CD4-positive, alpha-beta memory T cell (primary cell): ENCODE measurements at regions of chr6 and their contacts with region 1.

Region 1: DNA sequence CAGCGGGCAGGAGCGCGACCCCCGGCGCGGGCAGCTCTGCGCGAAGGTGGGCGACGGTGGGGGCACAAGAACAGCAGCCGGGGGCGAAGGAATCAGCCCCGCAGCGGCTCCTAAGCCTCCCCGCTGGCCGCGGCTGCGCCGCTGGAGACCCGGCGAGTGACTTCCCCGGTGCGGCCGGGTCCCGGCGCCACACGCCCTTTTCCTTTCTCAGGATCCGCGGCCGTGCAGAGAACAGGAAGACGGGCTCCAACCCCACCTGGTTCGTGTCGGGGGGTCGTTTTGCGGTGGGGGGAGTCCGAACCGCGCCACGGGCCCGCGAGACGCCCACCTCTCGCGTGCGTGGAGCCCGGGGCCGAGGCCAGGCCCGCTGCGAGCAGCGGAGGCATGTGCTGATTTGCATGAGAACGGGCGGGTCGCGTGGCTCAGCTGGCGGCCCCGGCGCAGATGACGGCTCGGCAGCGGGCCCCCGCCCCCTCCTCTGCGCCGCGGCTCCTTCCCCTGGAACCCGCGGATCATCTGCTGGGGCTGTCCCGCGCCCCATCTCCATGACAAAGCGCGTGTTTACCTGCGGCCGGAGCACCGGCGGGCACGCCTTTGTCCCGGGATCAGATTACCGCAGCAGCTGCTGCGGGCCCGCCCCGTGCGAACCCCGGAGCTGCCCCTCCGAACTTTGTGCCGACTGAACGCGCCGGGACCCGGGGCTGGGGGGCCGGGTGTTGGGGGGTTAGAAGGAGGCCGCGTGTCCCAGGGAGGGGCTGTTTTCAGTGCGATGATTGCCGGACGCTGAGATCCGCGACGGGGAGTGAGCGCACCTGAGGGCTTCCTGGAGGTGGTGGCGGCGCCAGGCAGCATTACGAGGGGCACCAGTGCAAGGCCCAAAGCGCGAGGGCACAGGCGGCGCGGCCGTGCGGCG is 4.9 kb upstream of the DLL1 start:
- DNase-seq: peak in 4 of 5 donors; percentile 43 to 50 (median 45)
- H3K4me3 ChIP-seq: peak overlapping the region; percentile 17 to 49
- H3K4me3 Mint-ChIP-seq: peak overlapping the region; percentile 69 to 80 (median 76)
- H3K27ac ChIP-seq: no peak overlapping the region
- H3K27ac Mint-ChIP-seq: no peak overlapping the region
- H3K4me1 ChIP-seq: peaks cover 53% of the 10 kb centered on the region
- H3K4me1 Mint-ChIP-seq: peaks cover 24 to 43% (median 30%) of the 10 kb centered on the region in 4 donors
- H3K27me3 ChIP-seq: peaks cover 37% of the 10 kb centered on the region
- H3K27me3 Mint-ChIP-seq: peaks cover 38 to 51% of the 10 kb centered on the region in 2 donors

Region 2: DNA sequence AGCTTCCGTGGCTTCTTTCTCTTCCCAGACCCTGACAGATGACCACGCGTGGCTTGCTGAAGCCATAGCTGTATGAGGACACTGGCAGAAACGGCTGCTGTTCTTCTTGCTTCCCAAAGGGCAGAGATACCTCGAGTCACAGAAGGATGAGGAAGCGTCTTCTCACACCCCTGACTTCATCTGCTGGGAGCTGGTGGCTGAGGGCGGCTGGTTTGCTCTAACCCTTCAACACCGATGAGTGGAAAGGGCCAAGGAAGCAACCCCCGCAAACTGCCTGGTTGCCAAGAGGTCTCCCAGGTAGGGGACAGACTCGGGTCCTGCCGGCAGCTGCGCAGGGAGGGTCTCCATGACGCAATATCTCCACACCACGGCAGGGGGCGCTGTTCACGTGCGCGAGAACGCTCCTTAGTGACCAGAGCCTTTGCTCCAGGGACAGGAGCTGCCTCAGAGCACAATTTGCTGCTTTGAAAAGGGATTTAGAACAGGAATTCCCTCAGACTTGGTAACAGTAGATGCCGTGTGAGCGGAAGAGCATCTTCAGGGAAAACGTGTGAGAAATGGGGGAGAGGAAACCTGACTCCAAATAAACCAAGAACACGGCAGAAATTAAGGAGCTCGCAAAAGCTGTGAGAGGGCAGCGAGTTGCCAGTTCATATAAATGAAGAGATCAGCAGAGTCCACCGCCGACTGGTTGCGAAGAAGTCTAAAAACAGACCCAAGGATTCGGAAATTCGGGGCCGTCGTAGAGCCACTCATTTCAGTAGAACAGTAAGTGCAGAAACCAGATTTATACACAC is 464.1 kb before region 1 on chr6:
- CTCF ChIA-PET with region 1: interaction called, 18 read pairs
- POLR2A ChIA-PET with region 1: no interaction called
- intact Hi-C with region 1: no loop called
- DNase-seq: peak in 4 of 5 donors; percentile 52 to 56 (median 54)
- H3K4me3 ChIP-seq: no peak overlapping the region
- H3K4me3 Mint-ChIP-seq: no peak overlapping the region
- H3K27ac ChIP-seq: no peak overlapping the region
- H3K27ac Mint-ChIP-seq: peak overlapping the region in 1 of 7 donors; percentile 3
- H3K4me1 ChIP-seq: no peaks in the 10 kb centered on the region
- H3K4me1 Mint-ChIP-seq: peaks cover 0 to 6% (median 4%) of the 10 kb centered on the region in 4 donors
- H3K27me3 ChIP-seq: peaks cover 3% of the 10 kb centered on the region
- H3K27me3 Mint-ChIP-seq: peaks cover 26 to 30% of the 10 kb centered on the region in 2 donors

Region 3: GRCh38 chr6:169990095-169991030 is 305.4 kb before region 1 on chr6:
- CTCF ChIA-PET with region 1: interaction called, 6 read pairs
- POLR2A ChIA-PET with region 1: interaction called, 8 read pairs
- intact Hi-C with region 1: loop called (anchors 1 kb)
- DNase-seq: peak in 4 of 5 donors; percentile 10 to 28 (median 25)
- H3K4me3 ChIP-seq: no peak overlapping the region
- H3K4me3 Mint-ChIP-seq: peak overlapping the region; percentile 50 to 84 (median 62)
- H3K27ac ChIP-seq: no peak overlapping the region
- H3K27ac Mint-ChIP-seq: peak overlapping the region in 5 of 7 donors; percentile 10 to 81 (median 57)
- H3K4me1 ChIP-seq: peaks cover 21% of the 10 kb centered on the region
- H3K4me1 Mint-ChIP-seq: peaks cover 17 to 27% (median 24%) of the 10 kb centered on the region in 4 donors
- H3K27me3 ChIP-seq: no peaks in the 10 kb centered on the region
- H3K27me3 Mint-ChIP-seq: no peaks in the 10 kb centered on the region

Region 4: DNA sequence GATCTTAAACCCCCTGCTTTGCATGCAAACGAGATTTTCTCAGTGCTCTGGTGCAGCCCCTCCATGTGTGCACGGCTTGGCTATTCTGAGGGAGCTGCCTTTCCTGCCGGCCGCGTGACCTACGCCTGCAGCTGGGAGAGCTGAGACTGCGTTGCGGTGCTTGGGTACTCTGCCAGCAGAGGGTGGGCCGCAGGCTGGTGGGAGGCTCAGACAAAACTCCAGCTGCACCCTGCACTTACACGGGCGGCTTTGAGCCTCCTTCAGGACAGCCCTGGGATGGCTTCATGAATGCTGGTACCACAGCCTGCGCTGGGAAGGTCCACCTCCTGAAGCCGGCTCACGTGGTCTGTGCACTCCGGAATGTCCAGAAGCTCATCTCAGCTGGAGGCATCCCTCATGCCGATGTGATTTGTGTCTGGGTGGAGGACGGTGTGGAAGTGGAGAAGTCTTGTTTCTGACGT is 228.6 kb before region 1 on chr6:
- CTCF ChIA-PET with region 1: no interaction called
- POLR2A ChIA-PET with region 1: no interaction called
- intact Hi-C with region 1: no loop called
- DNase-seq: no peak
- H3K4me3 ChIP-seq: no peak overlapping the region
- H3K4me3 Mint-ChIP-seq: no peak overlapping the region
- H3K27ac ChIP-seq: no peak overlapping the region
- H3K27ac Mint-ChIP-seq: no peak overlapping the region
- H3K4me1 ChIP-seq: no peaks in the 10 kb centered on the region
- H3K4me1 Mint-ChIP-seq: no peaks in the 10 kb centered on the region
- H3K27me3 ChIP-seq: no peaks in the 10 kb centered on the region
- H3K27me3 Mint-ChIP-seq: peaks cover 8 to 10% of the 10 kb centered on the region in 2 donors

Region 5: GRCh38 chr6:170147832-170148708 is 147.7 kb before region 1 on chr6:
- CTCF ChIA-PET with region 1: interaction called, 3 read pairs
- POLR2A ChIA-PET with region 1: interaction called, 4 read pairs
- intact Hi-C with region 1: loop called (anchors 5 kb)
- DNase-seq: peak; percentile 31 to 62 (median 47)
- H3K4me3 ChIP-seq: peak overlapping the region in 1 of 2 donors; percentile 17
- H3K4me3 Mint-ChIP-seq: peak overlapping the region; percentile 70 to 89 (median 82)
- H3K27ac ChIP-seq: no peak overlapping the region
- H3K27ac Mint-ChIP-seq: peak overlapping the region; percentile 70 to 92 (median 87)
- H3K4me1 ChIP-seq: peaks cover 29% of the 10 kb centered on the region
- H3K4me1 Mint-ChIP-seq: peaks cover 23 to 59% (median 34%) of the 10 kb centered on the region in 4 donors
- H3K27me3 ChIP-seq: peaks cover 3% of the 10 kb centered on the region
- H3K27me3 Mint-ChIP-seq: peaks cover 5 to 7% of the 10 kb centered on the region in 2 donors

Region 6: GRCh38 chr6:170279977-170280688 is 15.6 kb before region 1 on chr6:
- CTCF ChIA-PET with region 1: interaction called, 5 read pairs
- POLR2A ChIA-PET with region 1: interaction called, 23 read pairs
- intact Hi-C with region 1: no loop called
- DNase-seq: peak; percentile 48 to 72 (median 59)
- H3K4me3 ChIP-seq: peak overlapping the region; percentile 31 to 47
- H3K4me3 Mint-ChIP-seq: peak overlapping the region; percentile 67 to 87 (median 82)
- H3K27ac ChIP-seq: peak overlapping the region; percentile 40
- H3K27ac Mint-ChIP-seq: peak overlapping the region; percentile 36 to 94 (median 86)
- H3K4me1 ChIP-seq: peaks cover 18% of the 10 kb centered on the region
- H3K4me1 Mint-ChIP-seq: peaks cover 19 to 30% (median 23%) of the 10 kb centered on the region in 4 donors
- H3K27me3 ChIP-seq: no peaks in the 10 kb centered on the region
- H3K27me3 Mint-ChIP-seq: peaks cover 4 to 6% of the 10 kb centered on the region in 2 donors